ENCODE measurements at regions of chr7 and their contacts with region 1.

Region 1: DNA sequence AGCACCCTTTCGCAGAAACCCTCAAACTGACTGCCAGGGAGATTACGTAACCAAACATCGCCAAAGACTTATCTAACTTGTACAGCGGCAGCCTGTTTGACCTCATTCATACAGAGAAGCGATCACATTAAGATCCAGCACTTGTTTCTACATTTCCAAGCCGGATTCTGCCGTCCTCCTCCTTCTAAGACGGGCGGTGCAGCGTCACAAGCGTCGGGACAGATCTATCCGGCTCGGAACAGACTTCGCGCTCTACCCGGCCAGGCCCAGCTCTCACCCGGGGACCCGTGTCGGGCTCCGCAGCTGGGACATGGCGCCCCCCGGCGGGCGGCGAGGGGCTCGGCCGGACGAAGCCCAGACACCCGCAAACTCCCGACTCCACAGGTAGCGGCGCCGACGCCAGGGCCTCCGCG is 373 bp downstream of the H2AZ2 start:
- DNase-seq: peak; percentile 90
- ATAC-seq: peak; percentile 65
- H3K4me3 Mint-ChIP-seq: peak overlapping the region; percentile 96
- H3K27ac Mint-ChIP-seq: peak overlapping the region; percentile 97
- H3K4me1 Mint-ChIP-seq: peaks cover 33% of the 10 kb centered on the region
- H3K27me3 Mint-ChIP-seq: no peaks in the 10 kb centered on the region
- CTCF ChIP-seq: no peak

Region 2: GRCh38 chr7:44490351-44491200 is 356.9 kb before region 1 on chr7 and contains the start of gene NUDCD3:
- CTCF ChIA-PET with region 1: no interaction called
- POLR2A ChIA-PET with region 1: interaction called, 9 read pairs
- intact Hi-C with region 1: loop called (anchors 1 kb)
- DNase-seq: peak; percentile 80
- ATAC-seq: peak; percentile 84
- H3K4me3 Mint-ChIP-seq: peak within 1 kb of the TSS; percentile 90
- H3K27ac Mint-ChIP-seq: peak within 1 kb of the TSS; percentile 97
- H3K4me1 Mint-ChIP-seq: peaks cover 46% of the 10 kb centered on the region
- H3K27me3 Mint-ChIP-seq: peaks cover 5% of the 10 kb centered on the region
- CTCF ChIP-seq: no peak
- total RNA-seq, gene NUDCD3: 80.7 and 85.1 TPM in 2 replicates

Region 3: GRCh38 chr7:44587843-44588711 is 259.4 kb before region 1 on chr7:
- CTCF ChIA-PET with region 1: interaction called, 15 read pairs
- POLR2A ChIA-PET with region 1: interaction called, 44 read pairs
- intact Hi-C with region 1: loop called (anchors 1 kb)
- DNase-seq: no peak
- ATAC-seq: peak; percentile 79
- H3K4me3 Mint-ChIP-seq: no peak overlapping the region
- H3K27ac Mint-ChIP-seq: no peak overlapping the region
- H3K4me1 Mint-ChIP-seq: peaks cover 6% of the 10 kb centered on the region
- H3K27me3 Mint-ChIP-seq: peaks cover 3% of the 10 kb centered on the region
- CTCF ChIP-seq: no peak

Region 4: GRCh38 chr7:44748045-44748947 is 99.2 kb before region 1 on chr7 and contains the start of gene ZMIZ2:
- CTCF ChIA-PET with region 1: interaction called, 7 read pairs
- POLR2A ChIA-PET with region 1: interaction called, 5 read pairs
- intact Hi-C with region 1: loop called (anchors 1 kb)
- DNase-seq: peak; percentile 97
- ATAC-seq: peak; percentile 78
- H3K4me3 Mint-ChIP-seq: peak within 1 kb of the TSS; percentile 91
- H3K27ac Mint-ChIP-seq: peak within 1 kb of the TSS; percentile 95
- H3K4me1 Mint-ChIP-seq: peaks cover 48% of the 10 kb centered on the region
- H3K27me3 Mint-ChIP-seq: no peaks in the 10 kb centered on the region
- CTCF ChIP-seq: no peak
- total RNA-seq, gene ZMIZ2: 378 and 440 TPM in 2 replicates

Region 5: GRCh38 chr7:44899443-44899842 is 51.9 kb after region 1 on chr7:
- CTCF ChIA-PET with region 1: no interaction called
- POLR2A ChIA-PET with region 1: no interaction called
- intact Hi-C with region 1: no loop called
- DNase-seq: no peak
- ATAC-seq: no peak
- H3K4me3 Mint-ChIP-seq: no peak overlapping the region
- H3K27ac Mint-ChIP-seq: no peak overlapping the region
- H3K4me1 Mint-ChIP-seq: peaks cover 6% of the 10 kb centered on the region
- H3K27me3 Mint-ChIP-seq: no peaks in the 10 kb centered on the region
- CTCF ChIP-seq: no peak

Region 6: DNA sequence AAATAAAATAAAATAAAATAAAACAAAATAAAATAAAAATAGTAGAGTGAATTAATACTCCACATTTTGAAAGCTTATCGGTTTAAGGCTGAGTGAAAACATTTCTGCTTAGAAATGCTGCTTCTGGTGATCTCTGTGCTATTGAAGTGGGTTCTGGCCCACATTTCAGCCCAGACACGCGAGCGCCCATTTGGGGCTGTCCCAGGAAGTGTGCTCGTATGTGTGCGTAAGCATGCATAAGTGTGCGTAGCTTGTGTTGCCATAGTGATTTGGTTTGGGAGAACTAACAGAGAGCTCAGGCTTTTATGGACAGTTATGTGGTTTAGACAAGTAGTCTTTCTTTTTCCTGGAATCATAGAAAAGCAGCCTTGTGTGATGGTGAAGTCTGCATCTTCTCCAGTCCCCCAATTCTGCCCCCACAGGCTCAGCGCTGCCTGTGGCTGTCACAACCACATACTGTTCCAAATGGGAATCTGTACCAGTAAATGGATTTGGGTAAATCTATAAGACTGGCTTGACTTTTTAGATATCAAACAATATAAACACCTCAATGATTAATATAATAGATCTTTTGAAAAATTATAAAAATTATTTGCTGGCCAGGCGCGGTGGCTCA is 67.6 kb after region 1 on chr7:
- CTCF ChIA-PET with region 1: interaction called, 4 read pairs
- POLR2A ChIA-PET with region 1: interaction called, 3 read pairs
- intact Hi-C with region 1: loop called (anchors 1 kb)
- DNase-seq: peak; percentile 53
- ATAC-seq: peak; percentile 95
- H3K4me3 Mint-ChIP-seq: peak overlapping the region; percentile 41
- H3K27ac Mint-ChIP-seq: peak overlapping the region; percentile 78
- H3K4me1 Mint-ChIP-seq: peaks cover 11% of the 10 kb centered on the region
- H3K27me3 Mint-ChIP-seq: no peaks in the 10 kb centered on the region
- CTCF ChIP-seq: no peak

Region 7: GRCh38 chr7:45136106-45137060 is 288.9 kb after region 1 on chr7:
- CTCF ChIA-PET with region 1: interaction called, 17 read pairs
- POLR2A ChIA-PET with region 1: interaction called, 7 read pairs
- intact Hi-C with region 1: loop called (anchors 2 kb)
- DNase-seq: no peak
- ATAC-seq: peak; percentile 92
- H3K4me3 Mint-ChIP-seq: no peak overlapping the region
- H3K27ac Mint-ChIP-seq: no peak overlapping the region
- H3K4me1 Mint-ChIP-seq: peaks cover 11% of the 10 kb centered on the region
- H3K27me3 Mint-ChIP-seq: no peaks in the 10 kb centered on the region
- CTCF ChIP-seq: no peak

Region 8: DNA sequence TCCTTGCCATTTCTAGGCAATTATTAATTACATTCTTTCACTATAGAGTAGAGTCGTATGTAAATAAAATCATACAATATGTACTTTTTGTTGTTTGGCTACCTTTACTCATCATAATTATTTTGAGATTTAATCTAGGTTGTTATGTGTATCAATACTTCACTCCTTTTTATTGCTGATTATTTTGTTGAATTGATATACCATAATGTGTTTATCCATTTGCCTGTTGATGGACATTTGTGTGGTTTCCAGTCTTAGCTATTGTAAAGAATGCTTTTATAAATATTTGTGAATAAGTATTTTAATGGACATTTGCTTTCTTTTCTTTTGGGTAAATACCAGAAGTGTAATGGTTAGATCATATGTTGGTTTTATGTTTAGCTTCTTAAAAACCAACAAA is 484.0 kb after region 1 on chr7:
- CTCF ChIA-PET with region 1: no interaction called
- POLR2A ChIA-PET with region 1: no interaction called
- intact Hi-C with region 1: no loop called
- DNase-seq: no peak
- ATAC-seq: no peak
- H3K4me3 Mint-ChIP-seq: no peak overlapping the region
- H3K27ac Mint-ChIP-seq: no peak overlapping the region
- H3K4me1 Mint-ChIP-seq: no peaks in the 10 kb centered on the region
- H3K27me3 Mint-ChIP-seq: peaks cover 14% of the 10 kb centered on the region
- CTCF ChIP-seq: no peak

Region 9: DNA sequence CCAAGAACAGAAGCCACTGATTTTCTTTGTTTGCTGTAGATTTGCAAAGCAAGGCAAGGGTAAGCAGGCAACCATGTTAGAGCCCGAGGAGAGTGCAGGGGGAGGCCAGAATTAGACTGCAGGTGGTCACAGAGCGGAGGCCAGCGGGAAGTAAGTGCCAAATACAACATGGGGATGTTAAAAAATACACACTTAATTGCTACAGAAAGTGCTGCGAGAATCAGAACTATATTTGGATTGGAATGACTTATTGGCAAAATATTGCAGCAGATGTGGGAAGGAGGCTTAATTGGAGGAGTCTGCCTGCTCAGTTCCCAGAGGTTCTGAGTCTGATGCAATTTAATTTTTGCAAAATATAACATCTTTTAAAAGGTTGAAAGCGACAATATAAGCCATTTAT is 676.9 kb after region 1 on chr7:
- CTCF ChIA-PET with region 1: no interaction called
- POLR2A ChIA-PET with region 1: no interaction called
- intact Hi-C with region 1: no loop called
- DNase-seq: no peak
- ATAC-seq: no peak
- H3K4me3 Mint-ChIP-seq: no peak overlapping the region
- H3K27ac Mint-ChIP-seq: no peak overlapping the region
- H3K4me1 Mint-ChIP-seq: no peaks in the 10 kb centered on the region
- H3K27me3 Mint-ChIP-seq: no peaks in the 10 kb centered on the region
- CTCF ChIP-seq: no peak

Measured in activated B cell treated with CpG ODN at 0.5 μM for 24 hours (primary cell).